Posterior vena cava (tissue), 2 donors: ENCODE measurements at regions of chr1 and their contacts with region 1.

Region 1: DNA sequence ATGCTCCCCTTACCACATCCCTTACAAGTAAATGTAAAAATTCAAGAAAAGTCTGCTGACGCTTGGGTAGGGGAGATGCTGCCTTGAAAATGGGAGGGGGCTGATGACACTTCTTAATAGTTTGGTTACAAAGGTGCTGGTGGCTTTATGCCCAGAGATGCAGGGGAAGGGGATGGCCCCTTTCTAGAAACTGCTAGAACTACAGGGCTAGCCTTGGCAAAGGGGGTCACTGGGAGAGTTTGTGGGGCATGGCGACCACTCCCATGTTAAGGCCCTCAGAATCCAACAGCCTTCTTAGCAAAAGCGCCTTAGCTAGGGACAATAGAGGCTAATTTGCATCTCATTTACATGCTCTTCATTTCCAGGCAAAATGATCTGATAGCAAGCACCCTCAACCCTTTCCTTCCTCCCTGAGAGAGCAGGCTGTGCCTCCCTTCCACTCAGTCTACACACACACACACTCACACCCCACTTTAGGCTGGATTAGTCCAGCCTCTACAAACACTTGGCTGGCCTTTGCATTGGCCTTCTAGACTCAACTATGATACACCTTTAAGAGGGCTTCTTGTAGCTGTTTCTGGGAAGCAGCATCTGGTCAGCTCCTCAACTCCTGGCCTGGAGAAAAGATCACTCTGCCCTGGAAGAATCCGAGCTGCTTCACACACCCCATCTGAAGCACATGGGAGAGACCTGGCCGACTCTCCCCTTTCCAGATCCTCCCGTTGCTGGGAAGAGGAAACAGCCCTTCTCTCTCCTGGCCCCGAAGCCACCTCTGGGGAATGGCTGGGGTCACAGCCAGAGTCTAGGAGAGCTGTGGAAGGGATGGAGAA is 1.7 kb downstream of the SEMA6C start:
- DNase-seq: peak; percentile 68

Region 2: DNA sequence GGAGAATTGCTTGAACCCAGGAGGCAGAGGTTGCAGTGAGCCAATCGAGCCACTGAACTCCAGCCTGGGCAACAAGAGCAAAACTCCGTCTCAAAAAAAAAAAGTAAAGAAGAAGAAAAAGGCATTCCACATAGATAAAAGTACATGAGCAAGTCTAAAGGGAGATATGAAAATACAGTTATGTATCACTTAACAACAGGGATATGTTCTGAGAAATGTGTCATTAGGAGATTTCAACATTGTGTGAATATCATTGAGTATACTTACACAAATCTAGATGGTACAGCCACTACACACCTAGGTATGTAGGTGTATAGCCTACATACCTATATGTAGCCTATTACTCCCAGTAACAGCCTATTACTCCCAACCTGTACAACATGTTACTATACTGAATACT is 281.0 kb before region 1 on chr1:
- intact Hi-C with region 1: no loop called
- DNase-seq: no peak

Region 3: DNA sequence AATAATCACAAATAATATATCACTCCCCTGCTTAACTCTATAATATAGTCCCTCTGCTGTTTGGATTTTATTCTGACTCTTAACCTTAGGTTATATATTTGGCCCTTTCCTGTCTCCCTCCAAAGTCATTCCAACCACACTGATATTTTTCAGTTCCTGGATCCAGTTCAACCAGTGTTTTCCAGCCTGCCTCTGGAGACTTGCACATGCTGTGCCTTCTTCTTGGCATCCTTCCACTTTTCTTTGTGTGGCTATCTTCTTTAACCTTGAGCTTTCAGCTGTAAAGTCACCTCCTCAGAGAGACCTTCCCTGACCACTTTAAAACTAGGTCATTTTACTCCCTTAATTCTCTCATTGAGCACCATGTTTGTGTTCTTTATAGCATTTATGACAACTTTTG is 189.4 kb before region 1 on chr1:
- intact Hi-C with region 1: no loop called
- DNase-seq: no peak

Region 4: GRCh38 chr1:151106894-151107293 is 37.8 kb before region 1 on chr1:
- intact Hi-C with region 1: loop called in 1 of 2 experiments (anchors 5 kb)
- DNase-seq: no peak

Region 5: GRCh38 chr1:151619489-151620093 is 474.9 kb after region 1 on chr1:
- intact Hi-C with region 1: no loop called
- DNase-seq: no peak